CD8-positive, alpha-beta T cell (primary cell): ENCODE measurements at regions of chr4 and their contacts with region 1.

Region 1: DNA sequence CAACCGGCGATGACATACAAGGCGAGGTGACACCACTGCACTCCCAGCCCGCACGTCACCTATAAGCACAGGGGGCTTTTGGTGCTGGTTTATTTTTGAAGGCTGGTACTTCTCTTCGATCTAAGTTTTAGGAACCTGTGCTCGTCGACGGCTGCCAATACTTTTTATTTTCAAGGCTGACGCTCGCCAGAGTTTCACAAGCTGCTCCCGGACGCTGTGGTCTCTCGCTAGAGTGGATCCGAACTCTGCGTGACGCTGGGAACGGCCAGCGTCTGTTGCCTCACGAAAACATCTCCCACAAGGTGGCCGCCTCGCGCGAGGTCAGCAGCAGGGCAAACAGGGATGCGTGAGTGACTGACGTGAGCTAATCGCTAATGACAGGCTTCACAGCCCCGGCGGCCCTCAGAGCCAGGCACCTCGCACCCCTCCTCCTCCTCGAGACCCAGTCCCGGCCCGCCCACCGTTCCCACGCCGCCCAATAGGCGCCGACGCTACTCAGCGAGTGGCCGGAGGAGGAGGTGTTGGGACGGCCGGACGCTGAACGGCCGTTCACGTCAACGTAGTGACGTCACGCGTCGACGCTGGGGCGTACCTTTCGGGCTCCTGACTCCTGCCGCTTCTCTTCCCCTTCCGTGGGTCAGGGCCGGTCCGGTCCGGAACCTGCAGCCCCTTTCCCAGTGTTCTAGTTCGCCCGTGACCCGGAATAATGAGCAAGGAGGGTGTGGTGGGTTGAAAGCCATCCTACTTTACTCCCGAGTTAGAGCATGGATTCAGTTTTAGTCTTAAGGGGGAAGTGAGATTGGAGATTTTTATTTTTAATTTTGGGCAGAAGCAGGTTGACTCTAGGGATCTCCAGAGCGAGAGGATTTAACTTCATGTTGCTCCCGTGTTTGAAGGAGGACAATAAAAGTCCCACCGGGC is at the start of gene CLCN3:
- DNase-seq: peak; percentile 81 to 96 (median 93)
- ATAC-seq: peak; percentile 70
- H3K4me3 ChIP-seq: peak within 1 kb of the TSS; percentile 77 to 98
- H3K4me3 Mint-ChIP-seq: peak within 1 kb of the TSS; percentile 91
- H3K27ac ChIP-seq: peak within 1 kb of the TSS; percentile 92 to 99
- H3K27ac Mint-ChIP-seq: peak within 1 kb of the TSS; percentile 99
- H3K4me1 ChIP-seq: peaks cover 44% of the 10 kb centered on the region
- H3K4me1 Mint-ChIP-seq: peaks cover 62% of the 10 kb centered on the region
- H3K27me3 ChIP-seq: no peaks in the 10 kb centered on the region
- H3K27me3 Mint-ChIP-seq: no peaks in the 10 kb centered on the region
- CTCF ChIP-seq: no peak
- total RNA-seq, gene CLCN3: 10.2 to 10.9 TPM

Region 2: DNA sequence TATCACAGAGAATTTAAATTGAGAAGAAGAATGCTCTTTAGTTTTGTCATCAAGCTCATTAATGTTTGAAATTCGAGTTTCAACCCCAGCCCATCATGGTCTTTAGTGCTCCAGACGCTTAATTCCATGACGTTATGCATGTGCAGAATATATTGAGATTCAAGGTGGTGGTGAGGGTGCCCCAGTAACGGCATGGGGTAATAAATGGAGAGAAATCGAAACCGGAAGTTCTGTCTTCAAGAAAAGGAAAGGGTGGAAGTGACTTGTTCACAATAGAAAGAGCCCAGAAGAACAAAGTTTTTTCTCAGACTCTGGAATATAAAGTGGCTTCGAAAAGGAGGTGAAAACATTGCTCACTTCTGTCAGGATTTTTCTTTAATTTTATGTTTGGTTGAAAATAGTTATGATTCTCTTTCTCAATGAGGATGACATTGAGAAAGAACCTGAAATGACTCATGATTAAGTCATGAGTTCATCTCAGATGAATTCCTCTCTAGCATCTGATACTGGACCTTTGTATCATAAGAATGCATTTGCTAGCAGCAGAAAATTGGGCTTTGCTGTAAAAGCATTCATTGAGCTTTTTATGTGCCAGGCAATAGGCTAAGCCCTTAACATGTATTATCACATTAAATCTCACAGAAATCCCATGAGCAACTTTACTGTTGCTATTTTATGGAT is 1139.1 kb before region 1 on chr4:
- CTCF ChIA-PET with region 1: no interaction called
- POLR2A ChIA-PET with region 1: no interaction called
- intact Hi-C with region 1: loop called in 1 of 2 experiments (anchors 5 kb)
- DNase-seq: peak in 8 of 9 experiments; percentile 16 to 89 (median 56)
- ATAC-seq: peak; percentile 67
- H3K4me3 ChIP-seq: peak overlapping the region; percentile 56 to 93
- H3K4me3 Mint-ChIP-seq: peak overlapping the region; percentile 99
- H3K27ac ChIP-seq: peak overlapping the region; percentile 82 to 96
- H3K27ac Mint-ChIP-seq: peak overlapping the region; percentile 97
- H3K4me1 ChIP-seq: peaks cover 42% of the 10 kb centered on the region
- H3K4me1 Mint-ChIP-seq: peaks cover 66% of the 10 kb centered on the region
- H3K27me3 ChIP-seq: no peaks in the 10 kb centered on the region
- H3K27me3 Mint-ChIP-seq: no peaks in the 10 kb centered on the region
- CTCF ChIP-seq: no peak

Region 3: GRCh38 chr4:169383724-169384123 is 236.5 kb before region 1 on chr4:
- CTCF ChIA-PET with region 1: no interaction called
- POLR2A ChIA-PET with region 1: no interaction called
- intact Hi-C with region 1: no loop called
- DNase-seq: no peak
- ATAC-seq: no peak
- H3K4me3 ChIP-seq: no peak overlapping the region
- H3K4me3 Mint-ChIP-seq: no peak overlapping the region
- H3K27ac ChIP-seq: no peak overlapping the region
- H3K27ac Mint-ChIP-seq: no peak overlapping the region
- H3K4me1 ChIP-seq: no peaks in the 10 kb centered on the region
- H3K4me1 Mint-ChIP-seq: no peaks in the 10 kb centered on the region
- H3K27me3 ChIP-seq: no peaks in the 10 kb centered on the region
- H3K27me3 Mint-ChIP-seq: no peaks in the 10 kb centered on the region
- CTCF ChIP-seq: no peak

Region 4: GRCh38 chr4:169640261-169640870 is 20.1 kb after region 1 on chr4:
- CTCF ChIA-PET with region 1: interaction called, 3 read pairs
- POLR2A ChIA-PET with region 1: interaction called, 3 read pairs
- intact Hi-C with region 1: loop called in 1 of 2 experiments (anchors 2 kb)
- DNase-seq: no peak
- ATAC-seq: no peak
- H3K4me3 ChIP-seq: no peak overlapping the region
- H3K4me3 Mint-ChIP-seq: no peak overlapping the region
- H3K27ac ChIP-seq: no peak overlapping the region
- H3K27ac Mint-ChIP-seq: no peak overlapping the region
- H3K4me1 ChIP-seq: no peaks in the 10 kb centered on the region
- H3K4me1 Mint-ChIP-seq: no peaks in the 10 kb centered on the region
- H3K27me3 ChIP-seq: no peaks in the 10 kb centered on the region
- H3K27me3 Mint-ChIP-seq: no peaks in the 10 kb centered on the region
- CTCF ChIP-seq: no peak

Region 5: DNA sequence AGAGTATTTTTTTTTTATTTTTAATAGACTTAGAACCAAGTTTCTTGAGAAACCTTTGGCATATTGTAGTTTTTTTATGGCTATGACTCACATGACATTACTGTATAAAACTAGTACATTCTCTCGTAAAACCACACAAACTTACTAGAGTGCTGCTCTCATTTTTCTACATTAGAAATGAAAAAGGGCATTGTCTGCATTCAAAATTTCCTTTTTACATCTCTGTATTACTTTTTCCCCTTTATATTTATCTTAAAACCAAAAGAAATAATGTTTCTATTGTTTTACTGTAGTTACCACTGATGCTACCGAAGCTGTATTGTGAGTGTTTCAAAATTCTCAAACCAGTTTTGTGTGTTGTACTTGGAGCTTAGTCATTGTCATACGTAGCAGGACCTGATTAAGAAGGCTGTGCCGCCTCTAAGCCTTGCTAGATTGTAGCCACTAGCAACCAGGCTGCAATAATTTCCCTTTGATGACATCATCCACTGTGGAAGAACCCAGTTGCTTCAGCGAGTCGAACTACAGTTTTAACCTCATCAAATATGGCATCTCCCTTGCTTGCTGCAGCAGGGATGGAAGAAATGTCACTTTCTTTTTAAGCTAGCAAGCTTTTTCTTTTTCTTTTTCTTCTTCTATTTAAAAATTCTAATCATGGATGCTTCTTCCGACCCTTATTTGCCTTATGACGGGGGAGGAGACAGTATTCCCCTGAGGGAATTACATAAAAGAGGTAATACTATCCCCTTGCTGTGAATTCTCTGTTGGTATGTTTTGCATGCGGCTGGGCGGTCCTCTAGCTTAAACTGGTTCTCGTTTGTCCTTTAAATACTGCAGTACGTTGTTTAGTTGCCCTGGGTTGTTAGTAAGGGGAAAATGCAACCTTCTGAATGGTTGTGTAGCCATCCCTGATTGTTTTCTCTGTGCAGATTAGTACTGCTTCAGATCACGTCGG is 39.8 kb after region 1 on chr4:
- CTCF ChIA-PET with region 1: no interaction called
- POLR2A ChIA-PET with region 1: interaction called, 5 read pairs
- intact Hi-C with region 1: loop called in 1 of 2 experiments (anchors 1 kb)
- DNase-seq: peak; percentile 29 to 91 (median 62)
- ATAC-seq: peak; percentile 96
- H3K4me3 ChIP-seq: peak overlapping the region; percentile 13 to 16
- H3K4me3 Mint-ChIP-seq: peak overlapping the region; percentile 80
- H3K27ac ChIP-seq: peak overlapping the region; percentile 13 to 45
- H3K27ac Mint-ChIP-seq: peak overlapping the region; percentile 88
- H3K4me1 ChIP-seq: peaks cover 23% of the 10 kb centered on the region
- H3K4me1 Mint-ChIP-seq: peaks cover 45% of the 10 kb centered on the region
- H3K27me3 ChIP-seq: no peaks in the 10 kb centered on the region
- H3K27me3 Mint-ChIP-seq: no peaks in the 10 kb centered on the region
- CTCF ChIP-seq: no peak

Region 6: DNA sequence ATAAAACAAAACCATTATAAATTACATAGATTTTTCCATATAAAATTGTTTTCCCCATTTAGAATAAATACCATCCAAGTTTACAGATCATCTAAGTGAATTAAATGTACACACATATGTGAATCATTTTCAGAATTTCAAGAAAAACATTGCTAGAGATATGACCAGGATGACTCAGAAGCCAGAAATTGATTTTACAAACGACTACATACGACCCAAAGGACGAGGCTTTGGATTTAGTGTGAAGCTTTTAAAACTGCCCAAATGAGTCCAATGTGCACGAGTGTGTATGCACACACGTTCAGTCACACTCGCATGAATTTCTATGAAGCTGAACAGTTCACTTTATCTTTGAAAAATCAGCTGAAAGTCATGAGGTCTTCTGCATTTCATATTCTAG is 368.0 kb after region 1 on chr4:
- CTCF ChIA-PET with region 1: no interaction called
- POLR2A ChIA-PET with region 1: no interaction called
- intact Hi-C with region 1: no loop called
- DNase-seq: no peak
- ATAC-seq: no peak
- H3K4me3 ChIP-seq: no peak overlapping the region
- H3K4me3 Mint-ChIP-seq: no peak overlapping the region
- H3K27ac ChIP-seq: no peak overlapping the region
- H3K27ac Mint-ChIP-seq: no peak overlapping the region
- H3K4me1 ChIP-seq: no peaks in the 10 kb centered on the region
- H3K4me1 Mint-ChIP-seq: no peaks in the 10 kb centered on the region
- H3K27me3 ChIP-seq: no peaks in the 10 kb centered on the region
- H3K27me3 Mint-ChIP-seq: no peaks in the 10 kb centered on the region
- CTCF ChIP-seq: no peak